Panc1 (cell line): ENCODE measurements at regions of chr6 and their contacts with region 1.

Region 1: DNA sequence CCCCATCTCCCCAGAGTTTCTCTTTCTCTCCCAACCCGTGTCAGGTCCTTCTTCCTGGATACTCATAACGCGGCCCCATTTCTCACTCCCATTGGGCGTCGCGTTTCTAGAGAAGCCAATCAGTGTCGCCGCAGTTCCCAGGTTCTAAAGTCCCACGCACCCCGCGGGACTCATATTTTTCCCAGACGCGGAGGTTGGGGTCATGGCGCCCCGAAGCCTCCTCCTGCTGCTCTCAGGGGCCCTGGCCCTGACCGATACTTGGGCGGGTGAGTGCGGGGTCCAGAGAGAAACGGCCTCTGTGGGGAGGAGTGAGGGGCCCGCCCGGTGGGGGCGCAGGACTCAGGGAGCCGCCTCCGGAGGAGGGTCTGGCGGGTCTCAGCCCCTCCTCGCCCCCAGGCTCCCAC is at the start of gene HLA-F:
- DNase-seq: no peak
- ATAC-seq: peak; percentile 96
- H3K4me3 ChIP-seq: peak within 1 kb of the TSS; percentile 49 to 51
- H3K27ac ChIP-seq: no peak within 1 kb of the TSS
- H3K4me1 ChIP-seq: no peaks in the 10 kb centered on the region
- H3K27me3 ChIP-seq: peaks cover 7% of the 10 kb centered on the region; the same call in 1 of the 2 replicates
- CTCF ChIP-seq: no peak
- total RNA-seq, gene HLA-F: 7.5 TPM

Region 2: GRCh38 chr6:30142665-30143064 is 419.4 kb after region 1 on chr6:
- CTCF ChIA-PET with region 1: interaction called, 10 read pairs
- POLR2A ChIA-PET with region 1: no interaction called
- in situ Hi-C with region 1: no loop called
- intact Hi-C with region 1: no loop called
- DNase-seq: no peak
- ATAC-seq: no peak
- H3K4me3 ChIP-seq: no peak overlapping the region
- H3K27ac ChIP-seq: no peak overlapping the region
- H3K4me1 ChIP-seq: no peaks in the 10 kb centered on the region
- H3K27me3 ChIP-seq: peaks cover 15% of the 10 kb centered on the region
- CTCF ChIP-seq: no peak

Region 3: GRCh38 chr6:30334075-30334783 is 611.0 kb after region 1 on chr6:
- CTCF ChIA-PET with region 1: no interaction called
- POLR2A ChIA-PET with region 1: no interaction called
- in situ Hi-C with region 1: no loop called
- intact Hi-C with region 1: no loop called
- DNase-seq: no peak
- ATAC-seq: no peak
- H3K4me3 ChIP-seq: no peak overlapping the region
- H3K27ac ChIP-seq: no peak overlapping the region
- H3K4me1 ChIP-seq: no peaks in the 10 kb centered on the region
- H3K27me3 ChIP-seq: no peaks in the 10 kb centered on the region
- CTCF ChIP-seq: no peak